Transverse colon (tissue), 4 donors: ENCODE measurements at regions of chr6 and their contacts with region 1.

Region 1: GRCh38 chr6:126786262-126786661 is 332.2 kb upstream of the RSPO3 start:
- DNase-seq: no peak
- H3K4me3 ChIP-seq: no peak overlapping the region
- H3K27ac ChIP-seq: no peak overlapping the region
- H3K4me1 ChIP-seq: no peaks in the 10 kb centered on the region
- H3K27me3 ChIP-seq: no peaks in the 10 kb centered on the region
- CTCF ChIP-seq: no peak
- EP300 ChIP-seq: no peak
- POLR2A ChIP-seq: no peak

Region 2: GRCh38 chr6:126831461-126831860 is 45.2 kb after region 1 on chr6:
- in situ Hi-C with region 1: no loop called
- intact Hi-C with region 1: loop called (anchors 2 kb)
- DNase-seq: no peak
- H3K4me3 ChIP-seq: no peak overlapping the region
- H3K27ac ChIP-seq: no peak overlapping the region
- H3K4me1 ChIP-seq: no peaks in the 10 kb centered on the region
- H3K27me3 ChIP-seq: no peaks in the 10 kb centered on the region
- CTCF ChIP-seq: no peak
- EP300 ChIP-seq: no peak
- POLR2A ChIP-seq: no peak